PC-3 (cell line): ENCODE measurements at regions of chr17 and their contacts with region 1.

Region 1: DNA sequence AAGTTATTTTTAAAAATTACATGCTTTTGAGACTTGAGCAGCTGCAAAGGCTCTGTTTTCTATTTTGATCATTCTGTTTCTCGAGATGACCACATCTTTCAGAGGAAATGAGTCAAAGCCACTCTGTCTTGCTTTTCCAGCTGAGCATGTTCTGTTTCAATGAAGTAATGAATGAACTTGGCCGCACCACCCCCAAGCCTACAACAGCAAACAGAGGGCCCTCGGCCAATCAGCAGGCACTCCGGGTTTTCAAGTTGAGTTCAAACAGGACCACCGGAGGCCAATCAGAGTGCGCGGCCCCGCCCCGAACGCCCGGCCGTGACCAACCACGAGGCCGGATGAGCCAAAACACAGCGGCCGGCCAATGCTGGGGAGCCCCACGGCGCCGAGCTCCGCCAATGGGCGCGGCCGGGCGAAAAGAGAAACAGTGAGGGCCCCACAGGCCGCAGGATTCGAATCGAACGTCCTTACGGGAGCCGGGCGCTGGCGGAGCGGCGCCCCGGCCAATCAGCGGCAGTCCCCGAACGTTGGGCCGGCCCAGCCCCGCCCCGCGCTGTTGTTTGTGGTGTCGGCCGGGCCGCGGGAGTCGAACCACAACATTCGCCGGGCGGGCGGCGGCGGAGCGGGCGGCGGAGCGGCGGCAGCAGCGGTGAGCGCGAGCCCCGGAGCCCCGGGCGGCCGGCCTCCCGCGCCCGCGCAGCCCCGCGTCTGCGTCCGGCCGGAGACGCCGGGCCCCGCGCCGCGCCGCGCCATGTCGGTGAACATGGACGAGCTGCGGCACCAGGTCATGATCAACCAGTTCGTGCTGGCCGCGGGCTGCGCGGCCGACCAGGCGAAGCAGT is at the start of gene UBALD2:
- DNase-seq: peak; percentile 100
- ATAC-seq: peak; percentile 94
- H3K4me3 ChIP-seq: peak within 1 kb of the TSS; percentile 77
- H3K27ac ChIP-seq: peak within 1 kb of the TSS; percentile 74
- H3K4me1 ChIP-seq: peaks cover 50% of the 10 kb centered on the region
- H3K27me3 ChIP-seq: no peaks in the 10 kb centered on the region
- CTCF ChIP-seq: no peak
- total RNA-seq, gene UBALD2: 59.5 and 63.5 TPM in 2 replicates

Region 2: GRCh38 chr17:76103274-76104139 is 161.5 kb before region 1 on chr17 and contains the start of gene EXOC7:
- CTCF ChIA-PET with region 1: no interaction called
- POLR2A ChIA-PET with region 1: no interaction called
- intact Hi-C with region 1: loop called (anchors 10 kb)
- DNase-seq: peak; percentile 98
- ATAC-seq: peak; percentile 82
- H3K4me3 ChIP-seq: peak within 1 kb of the TSS; percentile 95
- H3K27ac ChIP-seq: peak within 1 kb of the TSS; percentile 16
- H3K4me1 ChIP-seq: peaks cover 15% of the 10 kb centered on the region
- H3K27me3 ChIP-seq: no peaks in the 10 kb centered on the region
- CTCF ChIP-seq: no peak
- total RNA-seq, gene EXOC7: 153 and 173 TPM in 2 replicates

Region 3: DNA sequence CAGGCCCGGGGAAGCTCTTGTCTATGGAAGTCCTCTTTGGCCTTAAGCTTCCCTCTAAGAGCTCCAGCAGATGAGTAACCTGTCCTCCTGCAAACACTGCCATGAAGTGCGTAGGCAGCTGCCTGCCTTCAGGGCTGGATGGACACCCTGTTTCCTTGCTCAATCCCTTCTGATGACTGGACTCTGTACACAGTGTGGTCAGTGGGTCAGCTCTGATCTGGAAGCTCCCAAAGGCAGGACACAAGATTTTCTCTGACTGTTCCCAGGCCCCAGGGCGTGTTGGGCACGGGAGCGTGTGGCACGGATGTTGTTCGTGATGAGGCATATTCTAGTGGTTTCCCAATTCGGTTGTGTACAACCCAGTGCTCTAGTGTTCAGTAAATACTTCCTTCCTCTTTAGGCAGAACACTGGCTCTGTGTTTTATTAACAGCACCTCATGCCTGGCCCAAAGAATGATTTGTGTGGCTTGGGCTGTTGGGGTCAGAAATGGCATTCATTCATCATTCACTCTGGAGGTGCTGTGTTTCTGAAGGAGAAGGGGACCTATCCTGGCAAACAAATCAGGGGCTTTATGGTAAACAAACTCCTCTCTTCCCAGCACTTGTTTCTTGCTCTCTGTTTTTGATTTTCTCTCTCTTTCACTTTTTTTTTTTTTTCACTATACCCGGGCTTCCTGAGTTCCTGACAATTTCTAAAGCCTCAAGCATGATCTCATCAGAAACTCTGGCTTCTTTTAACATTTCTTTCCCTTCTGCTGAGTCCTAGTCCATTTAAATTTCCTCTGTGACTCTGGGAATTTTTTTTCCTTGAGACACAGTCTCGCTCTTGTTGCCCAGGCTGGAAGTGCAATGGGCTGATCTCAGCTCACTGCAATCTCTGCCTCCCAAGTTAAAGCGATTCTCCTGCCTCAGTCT is 12.7 kb before region 1 on chr17:
- CTCF ChIA-PET with region 1: interaction called, 3 read pairs
- POLR2A ChIA-PET with region 1: interaction called, 9 read pairs
- intact Hi-C with region 1: loop called (anchors 1 kb)
- DNase-seq: peak; percentile 100
- ATAC-seq: peak; percentile 98
- H3K4me3 ChIP-seq: peak overlapping the region; percentile 35; the same call in 1 of the 2 replicates
- H3K27ac ChIP-seq: peak overlapping the region; percentile 93
- H3K4me1 ChIP-seq: peaks cover 25% of the 10 kb centered on the region
- H3K27me3 ChIP-seq: no peaks in the 10 kb centered on the region
- CTCF ChIP-seq: no peak

Region 4: GRCh38 chr17:76292567-76292966 is 27.6 kb after region 1 on chr17:
- CTCF ChIA-PET with region 1: no interaction called
- POLR2A ChIA-PET with region 1: no interaction called
- intact Hi-C with region 1: no loop called
- DNase-seq: no peak
- ATAC-seq: no peak
- H3K4me3 ChIP-seq: no peak overlapping the region
- H3K27ac ChIP-seq: no peak overlapping the region
- H3K4me1 ChIP-seq: no peaks in the 10 kb centered on the region
- H3K27me3 ChIP-seq: no peaks in the 10 kb centered on the region
- CTCF ChIP-seq: no peak